ENCODE measurements at regions of chr3 and their contacts with region 1.

Region 1: GRCh38 chr3:47164007-47164881 is at the start of gene SETD2:
- DNase-seq: peak; percentile 94
- ATAC-seq: peak; percentile 86
- H3K4me3 Mint-ChIP-seq: peak within 1 kb of the TSS; percentile 97
- H3K27ac Mint-ChIP-seq: peak within 1 kb of the TSS; percentile 99
- H3K4me1 Mint-ChIP-seq: peaks cover 40% of the 10 kb centered on the region
- H3K27me3 Mint-ChIP-seq: no peaks in the 10 kb centered on the region
- total RNA-seq, gene SETD2: 31.8 to 35.8 TPM

Region 2: GRCh38 chr3:45688882-45689756 is 1475.1 kb before region 1 on chr3 and contains the start of gene SACM1L:
- CTCF ChIA-PET with region 1: no interaction called
- POLR2A ChIA-PET with region 1: no interaction called
- intact Hi-C with region 1: loop called in 1 of 2 experiments (anchors 5 kb)
- DNase-seq: peak; percentile 98
- ATAC-seq: peak; percentile 85
- H3K4me3 Mint-ChIP-seq: peak within 1 kb of the TSS; percentile 79
- H3K27ac Mint-ChIP-seq: peak within 1 kb of the TSS; percentile 97
- H3K4me1 Mint-ChIP-seq: peaks cover 46% of the 10 kb centered on the region
- H3K27me3 Mint-ChIP-seq: peaks cover 2% of the 10 kb centered on the region
- total RNA-seq, gene SACM1L: 34.2 to 51.8 TPM

Region 3: DNA sequence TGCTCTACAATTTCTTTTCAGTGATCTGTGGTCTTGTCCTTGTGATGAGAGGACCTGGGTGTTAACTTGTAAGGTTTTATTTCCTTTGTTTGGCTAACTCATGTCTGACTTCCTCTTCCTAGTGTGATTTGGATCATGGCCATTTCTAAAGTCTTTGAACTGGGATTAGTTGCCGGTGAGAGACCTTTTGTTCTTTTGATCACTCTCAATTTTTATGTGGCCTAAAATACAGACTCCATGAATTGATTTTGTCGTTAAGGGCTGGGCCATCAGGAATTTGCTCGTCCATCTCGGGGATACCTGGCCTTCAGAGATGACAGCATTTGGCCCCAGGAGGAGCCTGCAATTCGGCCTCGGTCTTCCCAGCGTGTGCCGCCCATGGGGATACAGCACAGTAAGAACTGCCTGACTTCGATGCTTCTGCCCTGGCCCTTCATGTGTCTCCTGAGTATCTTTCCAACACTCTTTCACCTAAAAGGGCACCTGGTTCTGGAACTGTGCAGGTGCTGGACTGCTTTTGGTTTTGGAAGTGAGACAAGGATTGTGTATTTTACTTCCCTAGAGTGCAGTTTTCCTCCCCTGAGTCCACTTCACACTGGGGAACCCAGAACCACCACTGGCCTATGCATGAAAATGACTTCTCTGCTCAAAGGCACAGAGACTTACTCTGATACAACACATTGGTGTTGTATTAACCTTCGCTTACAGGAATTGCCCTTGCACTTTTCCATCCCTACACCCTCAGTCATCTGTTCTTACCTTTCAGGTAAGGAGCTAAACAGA is 585.1 kb before region 1 on chr3:
- CTCF ChIA-PET with region 1: no interaction called
- POLR2A ChIA-PET with region 1: no interaction called
- intact Hi-C with region 1: no loop called
- DNase-seq: no peak
- ATAC-seq: no peak
- H3K4me3 Mint-ChIP-seq: no peak overlapping the region
- H3K27ac Mint-ChIP-seq: no peak overlapping the region
- H3K4me1 Mint-ChIP-seq: peaks cover 3% of the 10 kb centered on the region
- H3K27me3 Mint-ChIP-seq: peaks cover 6% of the 10 kb centered on the region

Region 4: DNA sequence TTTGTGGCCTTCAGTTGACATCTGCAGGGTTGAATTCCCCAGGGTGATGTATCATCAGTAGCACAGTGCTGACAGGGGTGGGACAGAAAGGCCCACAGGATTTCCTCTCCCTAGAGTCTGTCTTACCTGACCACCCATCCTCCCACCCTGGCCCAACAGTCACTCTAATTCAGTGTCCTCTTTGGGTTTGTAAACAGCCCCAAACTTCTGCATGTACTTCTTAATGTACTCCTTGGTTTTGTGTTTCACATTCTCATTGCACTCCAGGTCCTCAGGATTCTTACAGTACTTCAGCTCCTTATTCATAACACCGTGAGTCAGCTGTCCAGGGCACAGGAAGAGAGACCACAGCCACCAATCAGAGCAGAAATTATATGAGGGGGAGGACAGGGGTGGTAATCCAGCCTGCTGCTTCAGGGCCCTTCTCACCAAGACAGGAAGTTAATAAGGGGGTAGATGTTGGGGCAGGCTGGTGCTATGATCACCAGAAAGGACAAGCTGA is 147.3 kb before region 1 on chr3:
- CTCF ChIA-PET with region 1: no interaction called
- POLR2A ChIA-PET with region 1: no interaction called
- intact Hi-C with region 1: loop called in 1 of 2 experiments (anchors 5 kb)
- DNase-seq: peak; percentile 62
- ATAC-seq: peak; percentile 79
- H3K4me3 Mint-ChIP-seq: peak overlapping the region; percentile 24
- H3K27ac Mint-ChIP-seq: peak overlapping the region; percentile 85
- H3K4me1 Mint-ChIP-seq: peaks cover 46% of the 10 kb centered on the region
- H3K27me3 Mint-ChIP-seq: no peaks in the 10 kb centered on the region

Region 5: GRCh38 chr3:47057212-47057671 is 107.0 kb before region 1 on chr3:
- CTCF ChIA-PET with region 1: no interaction called
- POLR2A ChIA-PET with region 1: no interaction called
- intact Hi-C with region 1: loop called (anchors 1 to 10 kb)
- DNase-seq: peak; percentile 69
- ATAC-seq: peak; percentile 88
- H3K4me3 Mint-ChIP-seq: no peak overlapping the region
- H3K27ac Mint-ChIP-seq: peak overlapping the region; percentile 69
- H3K4me1 Mint-ChIP-seq: peaks cover 37% of the 10 kb centered on the region
- H3K27me3 Mint-ChIP-seq: no peaks in the 10 kb centered on the region

Region 6: DNA sequence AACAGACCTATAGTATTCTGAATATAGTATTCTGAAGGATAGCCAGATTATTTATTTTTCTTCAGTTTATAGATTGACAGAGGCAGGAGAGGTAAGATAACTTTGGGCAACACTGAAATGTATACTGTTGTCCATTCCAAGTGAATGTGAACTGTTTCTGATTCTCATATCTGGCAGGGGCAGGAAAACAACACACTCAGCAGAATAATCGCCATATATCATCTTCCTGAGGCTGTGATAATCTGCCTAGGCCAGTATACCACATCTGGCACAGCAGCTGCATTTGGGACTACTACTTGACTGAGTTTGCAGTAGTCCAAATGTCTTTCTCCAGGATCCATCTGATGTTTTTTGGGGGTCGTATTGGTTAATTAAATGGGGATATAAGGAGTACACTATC is 22.0 kb after region 1 on chr3:
- CTCF ChIA-PET with region 1: no interaction called
- POLR2A ChIA-PET with region 1: no interaction called
- intact Hi-C with region 1: no loop called
- DNase-seq: no peak
- ATAC-seq: no peak
- H3K4me3 Mint-ChIP-seq: no peak overlapping the region
- H3K27ac Mint-ChIP-seq: no peak overlapping the region
- H3K4me1 Mint-ChIP-seq: no peaks in the 10 kb centered on the region
- H3K27me3 Mint-ChIP-seq: no peaks in the 10 kb centered on the region

Region 7: GRCh38 chr3:47282424-47283192 is 118.4 kb after region 1 on chr3 and contains the starts of genes KIF9 and KLHL18:
- CTCF ChIA-PET with region 1: interaction called, 7 read pairs
- POLR2A ChIA-PET with region 1: interaction called, 4 read pairs
- intact Hi-C with region 1: loop called (anchors 1 kb)
- DNase-seq: peak; percentile 97
- ATAC-seq: peak; percentile 91
- H3K4me3 Mint-ChIP-seq: peak within 1 kb of the TSS; percentile 95
- H3K27ac Mint-ChIP-seq: peak within 1 kb of the TSS; percentile 99
- H3K4me1 Mint-ChIP-seq: peaks cover 31% of the 10 kb centered on the region
- H3K27me3 Mint-ChIP-seq: no peaks in the 10 kb centered on the region
- total RNA-seq, gene KIF9: 2.7 to 5.3 TPM
- total RNA-seq, gene KLHL18: 19.0 to 22.4 TPM

Region 8: GRCh38 chr3:47455806-47456452 is 291.7 kb after region 1 on chr3:
- CTCF ChIA-PET with region 1: no interaction called
- POLR2A ChIA-PET with region 1: no interaction called
- intact Hi-C with region 1: no loop called
- DNase-seq: no peak
- ATAC-seq: no peak
- H3K4me3 Mint-ChIP-seq: no peak overlapping the region
- H3K27ac Mint-ChIP-seq: no peak overlapping the region
- H3K4me1 Mint-ChIP-seq: peaks cover 22% of the 10 kb centered on the region
- H3K27me3 Mint-ChIP-seq: no peaks in the 10 kb centered on the region

Region 9: DNA sequence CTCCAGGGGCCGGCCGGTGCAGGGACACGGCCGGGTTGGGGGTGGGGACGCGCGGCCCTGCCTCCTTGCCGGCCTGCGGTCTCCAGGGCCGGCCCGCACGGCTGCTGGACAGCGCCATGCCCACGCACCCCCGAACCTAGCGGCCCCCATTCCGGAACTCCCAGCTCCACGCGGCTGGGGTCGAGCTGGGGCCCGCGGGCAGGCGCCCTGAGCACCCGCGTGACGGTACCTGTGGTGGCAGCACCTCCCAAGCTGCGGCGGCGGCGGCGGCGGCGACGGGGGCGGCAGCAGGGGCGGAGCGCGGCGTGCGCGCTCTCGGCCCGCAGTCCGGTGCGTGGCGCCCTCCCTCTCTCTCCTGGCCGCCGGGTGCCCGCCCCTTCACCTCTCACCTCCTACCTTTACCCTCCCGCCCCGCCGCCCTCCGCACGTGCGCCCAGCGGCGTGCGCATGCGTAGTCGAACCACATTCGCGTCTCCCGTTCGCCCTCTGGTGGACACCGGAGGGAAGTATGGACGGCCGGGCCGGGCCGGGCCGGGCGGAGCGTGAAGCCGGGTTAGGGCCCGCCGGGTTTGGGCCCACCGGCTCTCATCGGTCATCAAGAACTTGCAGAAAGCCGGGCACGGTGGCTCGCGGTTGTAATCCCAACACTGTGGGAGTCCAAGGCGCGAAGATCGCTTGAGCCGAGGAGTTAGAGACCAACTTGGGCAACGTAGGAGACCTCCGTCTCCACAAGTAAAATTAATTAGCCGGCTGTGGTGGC is 311.5 kb after region 1 on chr3 and contains the start of gene SCAP:
- CTCF ChIA-PET with region 1: no interaction called
- POLR2A ChIA-PET with region 1: no interaction called
- intact Hi-C with region 1: loop called in 1 of 2 experiments (anchors 1 kb)
- DNase-seq: peak; percentile 98
- ATAC-seq: peak; percentile 95
- H3K4me3 Mint-ChIP-seq: peak within 1 kb of the TSS; percentile 89
- H3K27ac Mint-ChIP-seq: peak within 1 kb of the TSS; percentile 84
- H3K4me1 Mint-ChIP-seq: peaks cover 33% of the 10 kb centered on the region
- H3K27me3 Mint-ChIP-seq: no peaks in the 10 kb centered on the region
- total RNA-seq, gene SCAP: 44.5 to 51.2 TPM

Region 10: GRCh38 chr3:47802734-47803477 is 638.7 kb after region 1 on chr3 and contains the start of gene DHX30:
- CTCF ChIA-PET with region 1: no interaction called
- POLR2A ChIA-PET with region 1: no interaction called
- intact Hi-C with region 1: loop called in 1 of 2 experiments (anchors 2 kb)
- DNase-seq: peak; percentile 93
- ATAC-seq: peak; percentile 92
- H3K4me3 Mint-ChIP-seq: peak within 1 kb of the TSS; percentile 96
- H3K27ac Mint-ChIP-seq: peak within 1 kb of the TSS; percentile 98
- H3K4me1 Mint-ChIP-seq: peaks cover 24% of the 10 kb centered on the region
- H3K27me3 Mint-ChIP-seq: no peaks in the 10 kb centered on the region
- total RNA-seq, gene DHX30: 81.6 to 82.3 TPM

Measured in activated CD4-positive, alpha-beta T cell treated with anti-CD3 and anti-CD28 coated beads for 36 hours (primary cell).